ENCODE measurements at regions of chr2 and their contacts with region 1.

Region 1: GRCh38 chr2:196076778-196077568 is 8.3 kb upstream of the DNAH7 start:
- DNase-seq: no peak
- ATAC-seq: peak; percentile 68
- H3K4me3 ChIP-seq: no peak overlapping the region
- H3K27ac ChIP-seq: no peak overlapping the region; the same call in 1 of the 2 replicates
- H3K4me1 ChIP-seq: peaks cover 14% of the 10 kb centered on the region
- H3K27me3 ChIP-seq: no peaks in the 10 kb centered on the region
- CTCF ChIP-seq: no peak
- EP300 ChIP-seq: no peak
- POLR2A ChIP-seq: no peak
- RAD21 ChIP-seq: no peak

Region 2: DNA sequence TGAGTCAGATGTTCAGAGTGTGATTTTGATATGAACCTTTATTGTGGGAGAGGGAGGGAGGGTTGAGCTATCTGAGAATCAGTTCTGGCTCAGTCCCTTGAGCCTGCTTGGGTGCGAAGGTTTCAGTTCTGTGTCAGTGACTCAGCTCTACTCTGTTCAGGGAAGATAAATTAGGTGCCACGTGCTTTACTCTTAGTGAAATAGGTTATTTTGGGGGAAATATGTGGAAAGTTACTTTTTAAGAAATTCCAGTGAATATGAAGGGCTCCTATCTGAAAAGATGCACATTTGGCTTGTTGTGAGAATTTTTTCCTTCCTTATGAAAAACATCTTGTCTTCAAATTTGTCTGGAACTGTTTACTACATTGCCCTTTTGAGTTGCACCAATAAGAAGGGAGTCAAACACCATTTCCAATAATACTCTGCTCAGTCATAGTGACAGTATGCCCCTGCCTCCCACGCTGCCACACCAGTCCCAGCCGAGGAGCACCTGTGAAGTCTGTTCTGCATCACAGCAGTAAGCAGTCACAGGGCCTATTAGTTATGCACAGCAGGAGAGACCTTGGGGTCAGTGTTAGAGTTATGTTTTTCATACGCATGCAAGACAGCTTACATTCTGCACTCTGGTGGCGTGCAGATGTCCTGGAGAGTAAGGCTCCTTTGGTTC is 24.5 kb after region 1 on chr2:
- CTCF ChIA-PET with region 1: interaction called, 52 read pairs
- POLR2A ChIA-PET with region 1: interaction called, 9 read pairs
- RAD21 ChIA-PET with region 1: interaction called, 126 read pairs
- SMC1A ChIA-PET with region 1: interaction called, 147 read pairs
- in situ Hi-C with region 1: no loop called
- intact Hi-C with region 1: no loop called
- DNase-seq: peak; percentile 80
- ATAC-seq: peak; percentile 96
- H3K4me3 ChIP-seq: no peak overlapping the region
- H3K27ac ChIP-seq: peak overlapping the region; percentile 34
- H3K4me1 ChIP-seq: peaks cover 24% of the 10 kb centered on the region
- H3K27me3 ChIP-seq: no peaks in the 10 kb centered on the region
- CTCF ChIP-seq: peak in 1 of 3 experiments; percentile 14; a peak in 1 of 6 replicates
- EP300 ChIP-seq: peak; percentile 57 to 74
- POLR2A ChIP-seq: 0 out of 2 replicates have a peak, but pooled peaks have one; percentile 16
- RAD21 ChIP-seq: peak; percentile 26; the same call in 1 of the 2 replicates

Region 3: GRCh38 chr2:196149948-196150347 is 73.0 kb after region 1 on chr2:
- CTCF ChIA-PET with region 1: interaction called, 13 read pairs
- POLR2A ChIA-PET with region 1: no interaction called
- RAD21 ChIA-PET with region 1: interaction called, 8 read pairs
- SMC1A ChIA-PET with region 1: interaction called, 18 read pairs
- in situ Hi-C with region 1: no loop called
- intact Hi-C with region 1: no loop called
- DNase-seq: no peak
- ATAC-seq: peak; percentile 68
- H3K4me3 ChIP-seq: peak overlapping the region; percentile 24; the same call in 1 of the 2 replicates
- H3K27ac ChIP-seq: peak overlapping the region; percentile 64
- H3K4me1 ChIP-seq: peaks cover 13% of the 10 kb centered on the region
- H3K27me3 ChIP-seq: no peaks in the 10 kb centered on the region
- CTCF ChIP-seq: no peak
- EP300 ChIP-seq: 0 out of 4 replicates have a peak, but pooled peaks of 1 of the 2 experiments have one; percentile 16
- POLR2A ChIP-seq: no peak
- RAD21 ChIP-seq: no peak

Region 4: DNA sequence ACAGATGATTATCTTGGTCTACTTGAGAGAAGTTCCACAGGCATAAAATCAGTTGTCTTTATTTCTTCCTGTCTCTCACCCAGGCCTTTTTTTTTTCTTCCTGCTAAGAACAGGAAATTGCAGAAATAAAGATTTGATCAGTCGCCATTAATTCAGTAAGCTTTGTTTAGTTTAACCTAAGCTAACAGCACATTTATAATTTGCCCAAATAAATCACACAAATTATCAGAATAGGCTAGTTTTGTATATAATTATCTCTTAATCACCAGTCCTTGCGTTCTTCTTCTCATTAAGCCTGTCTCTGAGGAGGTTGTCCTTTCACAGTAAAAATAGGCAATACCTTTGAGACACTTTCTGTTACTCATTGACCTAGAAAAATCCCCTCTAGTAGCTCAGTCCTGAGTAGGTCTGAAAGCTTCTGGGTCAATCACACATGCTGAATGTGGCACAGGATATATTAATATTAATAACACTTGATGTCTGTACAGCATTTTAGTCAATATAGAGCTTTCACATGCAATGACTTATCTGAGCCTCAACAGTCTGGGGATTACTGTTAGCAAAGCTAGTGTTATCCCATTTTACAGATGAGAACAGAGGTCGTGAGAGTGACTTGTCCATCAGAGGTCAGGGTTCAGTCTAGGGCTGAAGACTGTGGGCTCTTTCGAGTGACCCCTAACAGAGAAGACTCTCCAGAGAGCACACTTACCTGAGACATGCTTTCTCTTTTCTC is 105.6 kb after region 1 on chr2:
- CTCF ChIA-PET with region 1: interaction called, 35 read pairs
- POLR2A ChIA-PET with region 1: interaction called, 6 read pairs
- RAD21 ChIA-PET with region 1: interaction called, 14 read pairs
- SMC1A ChIA-PET with region 1: interaction called, 46 read pairs
- in situ Hi-C with region 1: no loop called
- intact Hi-C with region 1: no loop called
- DNase-seq: peak; percentile 71
- ATAC-seq: peak; percentile 87
- H3K4me3 ChIP-seq: no peak overlapping the region
- H3K27ac ChIP-seq: peak overlapping the region; percentile 42
- H3K4me1 ChIP-seq: peaks cover 27% of the 10 kb centered on the region
- H3K27me3 ChIP-seq: no peaks in the 10 kb centered on the region
- CTCF ChIP-seq: no peak
- EP300 ChIP-seq: peak; percentile 31 to 64
- POLR2A ChIP-seq: no peak
- RAD21 ChIP-seq: no peak

Region 5: GRCh38 chr2:196239622-196240587 is 162.9 kb after region 1 on chr2:
- CTCF ChIA-PET with region 1: interaction called, 15 read pairs
- POLR2A ChIA-PET with region 1: interaction called, 4 read pairs
- RAD21 ChIA-PET with region 1: interaction called, 39 read pairs
- SMC1A ChIA-PET with region 1: interaction called, 32 read pairs
- in situ Hi-C with region 1: no loop called
- intact Hi-C with region 1: no loop called
- DNase-seq: peak; percentile 86
- ATAC-seq: peak; percentile 79
- H3K4me3 ChIP-seq: no peak overlapping the region
- H3K27ac ChIP-seq: peak overlapping the region; percentile 75
- H3K4me1 ChIP-seq: peaks cover 36% of the 10 kb centered on the region
- H3K27me3 ChIP-seq: no peaks in the 10 kb centered on the region
- CTCF ChIP-seq: 0 out of 6 replicates have a peak, but pooled peaks of 1 of the 3 experiments have one; percentile 3
- EP300 ChIP-seq: peak; percentile 74 to 85
- POLR2A ChIP-seq: no peak
- RAD21 ChIP-seq: 0 out of 2 replicates have a peak, but pooled peaks have one; percentile 19

Region 6: GRCh38 chr2:196268538-196269338 is 191.8 kb after region 1 on chr2:
- CTCF ChIA-PET with region 1: interaction called, 197 read pairs
- POLR2A ChIA-PET with region 1: no interaction called
- RAD21 ChIA-PET with region 1: interaction called, 211 read pairs
- SMC1A ChIA-PET with region 1: interaction called, 248 read pairs
- in situ Hi-C with region 1: no loop called
- intact Hi-C with region 1: no loop called
- DNase-seq: no peak
- ATAC-seq: peak; percentile 61
- H3K4me3 ChIP-seq: no peak overlapping the region
- H3K27ac ChIP-seq: peak overlapping the region; percentile 40
- H3K4me1 ChIP-seq: peaks cover 18% of the 10 kb centered on the region
- H3K27me3 ChIP-seq: no peaks in the 10 kb centered on the region
- CTCF ChIP-seq: no peak
- EP300 ChIP-seq: no peak
- POLR2A ChIP-seq: no peak
- RAD21 ChIP-seq: no peak

Region 7: GRCh38 chr2:196337208-196337953 is 260.4 kb after region 1 on chr2:
- CTCF ChIA-PET with region 1: interaction called, 101 read pairs
- POLR2A ChIA-PET with region 1: no interaction called
- RAD21 ChIA-PET with region 1: interaction called, 66 read pairs
- SMC1A ChIA-PET with region 1: interaction called, 58 read pairs
- in situ Hi-C with region 1: no loop called
- intact Hi-C with region 1: loop called (anchors 1 kb)
- DNase-seq: no peak
- ATAC-seq: peak; percentile 67
- H3K4me3 ChIP-seq: no peak overlapping the region
- H3K27ac ChIP-seq: peak overlapping the region; percentile 48
- H3K4me1 ChIP-seq: peaks cover 7% of the 10 kb centered on the region; the same call in 1 of the 2 replicates
- H3K27me3 ChIP-seq: no peaks in the 10 kb centered on the region
- CTCF ChIP-seq: peak in 2 of 3 experiments; percentile 28 to 40; a peak in 3 of 6 replicates
- EP300 ChIP-seq: no peak
- POLR2A ChIP-seq: no peak
- RAD21 ChIP-seq: peak; percentile 52

Measured in GM12878 (cell line).